Cardiac septum (tissue), 1 donor: ENCODE measurements at regions of chr5 and their contacts with region 1.

Region 1: GRCh38 chr5:123036391-123037103 is at the start of gene PPIC:
- DNase-seq: peak; percentile 93
- total RNA-seq, gene PPIC: 40.0 TPM

Region 2: DNA sequence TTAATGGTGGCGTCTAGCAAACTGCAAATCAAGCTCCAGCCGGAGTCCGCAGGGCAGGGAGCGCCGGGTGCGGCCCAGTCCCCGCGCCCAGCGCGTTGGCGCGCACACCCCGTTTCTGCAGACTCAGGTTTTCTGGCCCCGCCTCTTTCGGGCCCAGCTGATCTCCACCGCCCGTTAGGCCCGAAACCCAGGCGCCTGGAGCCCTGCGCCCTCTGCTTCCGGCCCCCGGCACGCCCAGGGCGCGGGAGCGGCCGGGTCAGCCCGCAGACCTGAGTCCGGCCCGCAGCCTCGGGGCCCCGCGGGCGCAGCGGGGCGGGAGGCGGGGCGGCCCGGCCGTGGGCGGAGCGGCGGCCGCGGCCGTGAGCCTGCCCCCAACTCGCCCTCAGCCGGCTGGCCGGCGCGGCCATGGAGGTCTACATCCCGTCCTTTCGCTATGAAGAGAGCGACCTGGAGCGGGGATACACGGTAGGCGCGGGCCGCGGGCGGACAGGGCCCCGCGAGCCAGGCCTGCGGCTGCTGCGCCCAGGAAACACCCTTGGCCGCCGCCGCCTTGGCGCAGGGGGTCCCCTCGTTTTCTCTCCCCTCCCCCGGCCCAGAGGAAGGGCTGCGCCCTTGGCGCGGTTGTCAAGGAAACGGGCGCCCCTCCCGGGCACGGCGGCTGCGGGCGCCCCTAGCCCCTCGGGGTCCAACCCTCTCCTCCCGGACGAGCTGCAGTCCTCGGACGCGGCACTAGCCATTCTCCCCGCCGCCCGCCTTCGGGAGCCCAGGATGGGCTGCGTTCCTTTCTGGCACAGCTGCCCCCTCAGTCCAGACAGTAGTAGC is 191.1 kb before region 1 on chr5 and contains the start of gene SNX24:
- intact Hi-C with region 1: loop called (anchors 2 kb)
- DNase-seq: peak; percentile 93
- total RNA-seq, gene SNX24: 14.0 TPM

Region 3: DNA sequence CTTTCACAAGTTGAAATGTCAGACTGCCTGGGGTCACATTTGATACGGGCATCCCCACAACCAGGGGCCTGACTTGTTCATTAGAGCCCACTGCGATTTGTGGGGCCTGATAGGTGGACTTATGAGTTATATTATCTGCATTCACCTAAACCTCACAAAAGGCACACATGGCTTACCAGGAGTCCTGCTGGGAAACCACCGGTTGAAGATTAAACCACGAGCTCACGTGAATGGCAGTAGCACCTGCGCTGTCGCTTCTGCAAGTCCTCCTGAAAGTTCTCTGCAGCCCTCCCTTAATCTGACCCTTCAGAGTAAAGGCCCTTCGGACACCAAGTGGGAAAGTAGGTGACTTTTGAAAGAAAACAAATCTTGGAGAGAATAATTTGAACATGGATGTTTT is 68.9 kb before region 1 on chr5:
- intact Hi-C with region 1: loop called (anchors 5 kb)
- DNase-seq: no peak

Region 4: DNA sequence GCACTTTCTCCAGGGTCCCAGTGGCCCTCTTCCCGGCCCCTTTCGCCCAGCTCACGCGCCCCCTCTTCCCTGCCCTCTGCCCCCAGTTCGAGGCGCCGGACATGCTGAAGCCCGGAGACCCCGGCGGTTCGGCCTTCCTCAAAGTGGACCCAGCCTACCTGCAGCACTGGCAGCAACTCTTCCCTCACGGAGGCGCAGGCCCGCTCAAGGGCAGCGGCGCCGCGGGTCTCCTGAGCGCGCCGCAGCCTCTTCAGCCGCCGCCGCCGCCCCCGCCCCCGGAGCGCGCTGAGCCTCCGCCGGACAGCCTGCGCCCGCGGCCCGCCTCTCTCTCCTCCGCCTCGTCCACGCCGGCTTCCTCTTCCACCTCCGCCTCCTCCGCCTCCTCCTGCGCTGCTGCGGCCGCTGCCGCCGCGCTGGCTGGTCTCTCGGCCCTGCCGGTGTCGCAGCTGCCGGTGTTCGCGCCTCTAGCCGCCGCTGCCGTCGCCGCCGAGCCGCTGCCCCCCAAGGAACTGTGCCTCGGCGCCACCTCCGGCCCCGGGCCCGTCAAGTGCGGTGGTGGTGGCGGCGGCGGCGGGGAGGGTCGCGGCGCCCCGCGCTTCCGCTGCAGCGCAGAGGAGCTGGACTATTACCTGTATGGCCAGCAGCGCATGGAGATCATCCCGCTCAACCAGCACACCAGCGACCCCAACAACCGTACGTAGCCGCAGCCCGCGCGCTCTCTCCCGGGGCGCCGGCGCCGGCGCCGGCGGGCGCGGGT is 53.5 kb after region 1 on chr5:
- intact Hi-C with region 1: loop called (anchors 5 kb)
- DNase-seq: no peak

Region 5: GRCh38 chr5:123344816-123345426 is 308.4 kb after region 1 on chr5:
- intact Hi-C with region 1: loop called (anchors 10 kb)
- DNase-seq: no peak